Activated CD8-positive, alpha-beta memory T cell treated with anti-CD3 and anti-CD28 coated beads, Interleukin-2, amount 10 ng/mL, durations not matched to agents 7 days and 5 days (primary cell): ENCODE measurements at regions of chr3 and their contacts with region 1.

Region 1: GRCh38 chr3:46538803-46539442 is 27.2 kb downstream of the LRRC2 start:
- DNase-seq: peak; percentile 96
- ATAC-seq: peak; percentile 92
- H3K4me3 Mint-ChIP-seq: peak overlapping the region; percentile 64
- H3K27ac Mint-ChIP-seq: peak overlapping the region; percentile 92
- H3K4me1 Mint-ChIP-seq: peaks cover 61% of the 10 kb centered on the region
- H3K27me3 Mint-ChIP-seq: peaks cover 16% of the 10 kb centered on the region

Region 2: GRCh38 chr3:46496741-46497554 is 42.0 kb before region 1 on chr3:
- CTCF ChIA-PET with region 1: interaction called, 29 read pairs
- DNase-seq: peak; percentile 70
- ATAC-seq: peak; percentile 57
- H3K4me3 Mint-ChIP-seq: no peak overlapping the region
- H3K27ac Mint-ChIP-seq: no peak overlapping the region
- H3K4me1 Mint-ChIP-seq: peaks cover 4% of the 10 kb centered on the region
- H3K27me3 Mint-ChIP-seq: peaks cover 6% of the 10 kb centered on the region

Region 3: GRCh38 chr3:46517016-46517793 is 21.7 kb before region 1 on chr3:
- CTCF ChIA-PET with region 1: interaction called, 11 read pairs
- DNase-seq: no peak
- ATAC-seq: peak; percentile 51
- H3K4me3 Mint-ChIP-seq: no peak overlapping the region
- H3K27ac Mint-ChIP-seq: no peak overlapping the region
- H3K4me1 Mint-ChIP-seq: peaks cover 6% of the 10 kb centered on the region
- H3K27me3 Mint-ChIP-seq: peaks cover 6% of the 10 kb centered on the region

Region 4: DNA sequence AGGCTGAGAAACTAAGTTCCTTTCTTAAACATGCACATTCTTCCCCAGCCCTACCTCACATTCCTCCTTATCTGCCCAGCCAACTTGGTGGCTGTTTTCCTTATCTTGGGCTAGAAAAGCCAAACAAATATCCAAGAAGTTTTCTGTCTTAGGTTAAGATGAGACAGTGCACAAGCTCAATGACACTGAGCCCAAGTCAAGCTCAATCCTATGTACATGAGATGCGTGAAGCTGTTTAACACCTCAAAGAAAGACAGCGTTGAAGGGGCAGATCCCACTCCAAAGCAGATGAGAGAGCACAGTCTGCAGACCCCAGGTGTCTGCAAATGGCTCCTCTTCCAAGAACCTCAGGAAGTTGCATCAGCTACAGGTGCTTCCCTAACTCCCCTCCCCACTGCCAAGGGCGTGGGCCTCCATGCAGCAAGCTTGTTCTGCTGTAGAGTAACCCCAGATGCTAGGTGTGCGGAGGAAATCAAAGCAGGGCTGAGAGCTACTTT is 10.5 kb after region 1 on chr3:
- CTCF ChIA-PET with region 1: interaction called, 13 read pairs
- DNase-seq: peak; percentile 38
- ATAC-seq: no peak
- H3K4me3 Mint-ChIP-seq: no peak overlapping the region
- H3K27ac Mint-ChIP-seq: no peak overlapping the region
- H3K4me1 Mint-ChIP-seq: peaks cover 30% of the 10 kb centered on the region
- H3K27me3 Mint-ChIP-seq: peaks cover 14% of the 10 kb centered on the region